ENCODE measurements at regions of chr15 and their contacts with region 1.

Region 1: DNA sequence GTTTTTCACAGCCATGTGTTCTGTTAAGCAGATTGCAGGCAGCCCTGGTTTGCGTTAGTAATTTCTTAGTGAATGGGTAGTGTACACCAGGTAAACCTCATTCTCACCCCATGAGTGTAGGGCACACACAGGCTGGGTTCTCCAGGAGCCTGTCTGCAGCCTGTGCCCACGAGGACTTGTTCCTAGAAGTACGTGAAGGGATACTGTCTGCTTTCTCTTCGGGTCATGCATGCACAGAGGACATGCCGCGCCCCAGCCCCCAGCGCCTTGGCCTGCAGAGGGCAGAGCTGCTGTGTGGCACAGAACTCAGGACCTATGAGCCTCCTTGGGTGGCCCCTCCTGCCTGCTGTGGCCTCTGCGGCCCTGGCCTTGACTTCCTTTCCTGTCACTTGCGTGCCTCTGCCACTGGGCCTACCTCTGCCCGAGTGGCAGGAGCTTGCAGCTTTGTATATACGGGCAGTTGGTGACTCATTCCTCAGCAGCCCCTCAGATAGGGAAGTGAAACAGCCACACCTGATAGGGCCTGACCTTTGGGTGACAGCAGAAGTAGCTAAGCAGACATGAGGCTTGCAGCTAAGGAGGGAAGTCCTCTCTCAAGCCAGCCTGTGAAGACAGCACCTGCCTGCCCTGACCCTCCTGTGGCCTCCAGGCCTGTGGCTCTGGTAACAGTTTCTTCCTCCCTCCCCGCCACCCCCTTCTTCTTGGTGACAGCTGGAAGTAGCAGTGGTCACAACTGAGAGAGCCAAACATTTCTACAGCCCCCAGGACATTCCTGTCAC is 19.5 kb downstream of the PPCDC start:
- DNase-seq: peak; percentile 99
- H3K4me3 ChIP-seq: peak overlapping the region in 1 of 8 donors; percentile 61
- H3K27ac ChIP-seq: peak overlapping the region; percentile 72 to 97 (median 94)
- H3K4me1 ChIP-seq: peaks cover 58 to 88% (median 72%) of the 10 kb centered on the region in 6 donors
- H3K27me3 ChIP-seq: no peaks in the 10 kb centered on the region
- CTCF ChIP-seq: peak; percentile 67 to 98 (median 90)
- POLR2A ChIP-seq: peak in 2 of 3 donors; percentile 3 to 81

Region 2: DNA sequence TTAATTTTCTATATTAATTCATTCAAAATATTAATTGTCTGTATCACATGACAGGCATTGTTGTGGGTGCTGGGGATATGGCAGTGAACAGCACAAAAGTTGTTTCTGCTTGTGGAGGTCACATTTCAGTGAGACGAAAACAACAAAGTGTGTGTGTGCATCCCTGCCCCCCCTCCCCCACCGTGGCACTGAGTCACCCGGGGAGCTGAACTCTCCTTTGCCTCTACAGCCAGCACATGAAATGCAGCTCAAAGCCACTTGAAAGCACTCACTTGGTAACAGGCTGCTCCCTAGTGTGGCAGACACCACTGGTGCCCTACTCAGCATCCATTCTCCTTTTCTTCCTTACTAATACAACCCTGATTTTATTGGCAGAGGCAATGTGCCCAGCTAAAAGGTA is 64.4 kb before region 1 on chr15:
- intact Hi-C with region 1: no loop called
- DNase-seq: peak; percentile 46
- H3K4me3 ChIP-seq: no peak overlapping the region
- H3K27ac ChIP-seq: no peak overlapping the region
- H3K4me1 ChIP-seq: no peaks in the 10 kb centered on the region
- H3K27me3 ChIP-seq: peaks cover 0 to 58% (median 0%) of the 10 kb centered on the region in 7 donors
- CTCF ChIP-seq: no peak
- POLR2A ChIP-seq: no peak

Region 3: DNA sequence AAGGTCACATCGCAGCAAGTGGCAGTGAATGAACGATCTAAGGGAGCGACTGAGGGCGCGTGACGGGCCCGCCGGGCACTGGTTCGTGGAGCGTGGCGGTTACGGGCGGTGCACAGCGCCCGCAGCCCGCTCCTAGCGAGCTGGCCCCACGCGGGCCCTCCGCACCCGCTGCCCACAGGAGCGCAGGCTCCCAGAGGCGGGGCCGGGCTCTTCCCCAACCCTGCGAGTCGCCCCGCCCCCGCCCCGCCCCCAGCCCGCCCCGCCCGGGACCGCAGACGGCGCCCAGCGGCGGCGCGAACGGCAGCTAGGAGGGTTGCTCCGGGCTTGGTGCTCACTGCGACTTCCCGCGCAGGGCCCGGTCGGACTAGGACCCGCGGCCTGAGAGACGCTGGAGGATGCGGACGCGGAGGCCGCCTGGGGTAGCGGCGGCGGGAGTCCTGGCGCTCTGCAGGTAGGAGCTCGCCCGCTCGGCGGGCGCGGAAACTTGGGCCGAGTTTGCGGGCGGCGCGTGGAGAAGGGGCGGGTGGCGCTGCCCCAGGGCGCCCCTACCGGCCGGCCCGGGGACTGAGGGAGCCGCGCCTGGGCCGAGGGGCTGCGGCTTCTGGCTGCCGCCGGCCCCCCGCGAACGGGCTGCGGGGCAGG is 158.8 kb after region 1 on chr15 and contains the start of gene C15orf39:
- intact Hi-C with region 1: loop called (anchors 5 kb)
- DNase-seq: peak; percentile 95
- H3K4me3 ChIP-seq: peak within 1 kb of the TSS; percentile 60 to 98 (median 93)
- H3K27ac ChIP-seq: peak within 1 kb of the TSS; percentile 91 to 97 (median 96)
- H3K4me1 ChIP-seq: peaks cover 30 to 81% (median 53%) of the 10 kb centered on the region in 6 donors
- H3K27me3 ChIP-seq: no peaks in the 10 kb centered on the region
- CTCF ChIP-seq: peak; percentile 58 to 99 (median 95)
- POLR2A ChIP-seq: peak; percentile 19 to 95 (median 88)
- total RNA-seq, gene C15orf39: 56.0 to 70.2 (median 67.6) TPM

Measured in spleen (tissue), 13 donors.